H1 (cell line): ENCODE measurements at regions of chr16 and their contacts with region 1.

Region 1: DNA sequence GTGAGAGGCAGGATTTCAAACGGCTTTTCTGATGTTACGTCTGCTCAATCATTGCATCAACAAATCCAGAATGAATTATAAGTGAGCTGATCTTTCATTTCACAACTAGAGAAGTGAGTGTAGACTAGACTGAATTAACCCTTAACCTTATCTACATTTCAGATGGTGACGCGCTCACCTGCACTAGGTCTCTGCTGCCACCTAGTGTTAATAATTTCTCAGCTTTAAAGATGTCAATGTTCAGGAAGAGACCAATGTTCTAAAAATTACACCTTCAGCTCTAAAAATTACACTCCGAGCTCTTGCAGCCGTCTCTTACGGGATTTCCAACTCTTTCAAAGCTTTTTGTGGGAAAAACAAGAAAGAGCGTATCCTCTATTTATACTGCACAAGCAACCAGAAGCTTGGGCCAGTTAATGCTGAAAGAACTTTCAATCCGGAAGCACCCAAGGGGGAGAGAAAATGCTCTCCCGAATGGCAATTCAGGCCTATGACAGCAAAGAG is 88.2 kb upstream of the FA2H start:
- DNase-seq: no peak
- H3K4me3 ChIP-seq: no peak overlapping the region
- H3K27ac ChIP-seq: no peak overlapping the region
- H3K4me1 ChIP-seq: peaks cover 6 to 17% (median 10%) of the 10 kb centered on the region in 4 experiments; a peak in 5 of 7 replicates
- H3K27me3 ChIP-seq: no peaks in the 10 kb centered on the region
- CTCF ChIP-seq: peak in 2 of 3 experiments; percentile 67 to 79; a peak in 3 of 4 replicates
- EP300 ChIP-seq: no peak
- POLR2A ChIP-seq: no peak
- RAD21 ChIP-seq: peak; percentile 90 to 91

Region 2: DNA sequence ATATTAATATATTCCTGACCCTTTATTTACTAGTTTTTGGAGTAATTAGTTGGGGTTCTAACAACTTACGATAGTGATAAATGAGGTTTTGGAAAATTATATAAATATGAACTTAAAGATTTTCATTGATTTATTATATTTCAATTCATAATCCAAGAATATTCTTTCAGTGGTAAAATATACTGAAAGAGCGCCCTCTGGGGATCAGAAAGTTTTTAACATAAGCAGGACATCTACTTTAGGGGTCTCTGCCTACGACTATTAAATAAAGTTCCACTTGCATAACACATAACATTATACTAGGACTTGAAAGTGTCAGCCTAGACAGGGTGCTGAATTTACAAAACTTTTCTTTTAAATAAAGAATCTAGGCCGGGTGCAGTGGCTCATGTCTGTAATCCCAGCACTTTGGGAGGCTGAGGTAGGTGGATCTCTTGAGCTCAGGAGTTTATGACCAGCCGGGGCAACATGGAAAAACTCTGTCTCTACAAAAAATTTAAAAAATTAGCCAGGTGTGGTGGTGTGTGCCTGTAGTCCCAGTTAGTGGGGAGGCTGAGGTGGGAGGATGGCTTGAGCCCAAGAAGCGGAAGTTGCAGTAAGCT is 211.7 kb before region 1 on chr16:
- CTCF ChIA-PET with region 1: interaction called, 11 read pairs
- POLR2A ChIA-PET with region 1: no interaction called
- DNase-seq: no peak
- H3K4me3 ChIP-seq: no peak overlapping the region
- H3K27ac ChIP-seq: no peak overlapping the region
- H3K4me1 ChIP-seq: no peaks in the 10 kb centered on the region
- H3K27me3 ChIP-seq: no peaks in the 10 kb centered on the region
- CTCF ChIP-seq: peak in 1 of 3 experiments; percentile 29; a peak in 2 of 4 replicates
- EP300 ChIP-seq: no peak
- POLR2A ChIP-seq: no peak
- RAD21 ChIP-seq: no peak

Region 3: DNA sequence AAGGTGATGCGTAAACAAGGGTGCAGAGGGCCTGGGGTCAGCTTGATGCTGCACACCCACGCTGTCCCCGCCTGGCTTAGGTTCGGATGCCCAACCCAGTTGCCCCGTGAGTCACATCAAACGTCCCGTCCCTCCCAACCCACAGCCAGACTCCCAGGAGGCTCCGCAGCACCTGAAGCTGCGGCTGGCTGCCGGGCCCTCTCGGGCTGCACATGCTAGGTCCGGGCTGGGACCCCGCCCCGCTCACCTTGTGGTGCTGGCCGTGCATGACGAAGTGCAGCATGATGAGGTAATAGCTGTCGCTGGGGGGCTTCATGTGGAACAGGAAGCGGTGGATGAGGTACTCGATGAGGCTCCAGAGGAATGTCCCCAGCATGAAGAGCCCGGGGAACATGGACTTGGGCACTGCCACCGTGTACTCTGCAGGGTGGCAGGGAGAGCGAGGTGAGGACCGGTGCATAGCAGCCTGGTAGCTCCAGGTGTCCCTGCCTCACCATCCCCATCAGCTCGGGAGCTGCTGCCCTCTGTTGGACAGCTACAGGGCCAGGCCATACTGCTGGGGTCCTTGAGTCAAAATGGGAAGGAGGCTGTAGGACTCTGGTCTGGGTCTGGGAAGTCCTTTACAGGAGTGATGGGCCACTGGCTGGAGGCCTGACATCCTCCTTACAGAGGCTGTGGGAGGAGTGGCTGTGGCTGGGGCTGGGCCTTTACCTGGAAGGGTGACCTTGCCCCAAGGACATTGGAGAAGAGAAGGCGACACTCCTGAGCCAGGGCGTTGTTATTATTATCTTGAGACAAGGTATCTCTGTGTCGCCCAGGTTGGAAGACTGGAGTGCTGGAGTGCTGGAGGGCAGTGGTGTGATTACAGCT is 143.8 kb before region 1 on chr16:
- CTCF ChIA-PET with region 1: interaction called, 104 read pairs
- POLR2A ChIA-PET with region 1: no interaction called
- DNase-seq: no peak
- H3K4me3 ChIP-seq: no peak overlapping the region
- H3K27ac ChIP-seq: no peak overlapping the region
- H3K4me1 ChIP-seq: no peaks in the 10 kb centered on the region; a peak in 1 of 7 replicates
- H3K27me3 ChIP-seq: no peaks in the 10 kb centered on the region
- CTCF ChIP-seq: peak; percentile 28 to 56 (median 51)
- EP300 ChIP-seq: no peak
- POLR2A ChIP-seq: no peak
- RAD21 ChIP-seq: peak; percentile 13 to 34; a peak in 2 of 4 replicates

Region 4: DNA sequence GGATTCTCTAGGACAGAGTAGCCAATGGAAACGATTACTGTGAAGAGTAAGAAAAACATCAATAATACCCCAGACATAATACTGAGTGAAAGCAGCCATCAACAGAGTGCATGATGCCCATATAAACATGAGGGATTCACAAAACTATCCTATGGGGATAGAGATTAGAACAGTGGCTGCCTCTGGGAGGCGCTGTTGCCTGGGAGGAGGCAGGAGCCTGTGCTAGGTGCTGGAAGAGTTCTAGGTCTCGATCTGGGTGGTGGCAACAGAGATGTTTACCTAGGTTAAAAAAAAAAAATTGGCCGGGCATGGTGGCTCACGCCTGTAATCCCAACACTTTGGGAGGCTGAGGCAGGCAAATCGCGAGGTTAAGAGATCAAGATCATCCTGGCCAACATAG is 96.1 kb before region 1 on chr16:
- CTCF ChIA-PET with region 1: interaction called, 18 read pairs
- POLR2A ChIA-PET with region 1: no interaction called
- DNase-seq: peak in 1 of 2 experiments; percentile 67
- H3K4me3 ChIP-seq: no peak overlapping the region
- H3K27ac ChIP-seq: no peak overlapping the region
- H3K4me1 ChIP-seq: no peaks in the 10 kb centered on the region
- H3K27me3 ChIP-seq: no peaks in the 10 kb centered on the region; a peak in 1 of 7 replicates
- CTCF ChIP-seq: peak; percentile 61 to 78 (median 63)
- EP300 ChIP-seq: no peak
- POLR2A ChIP-seq: no peak
- RAD21 ChIP-seq: peak; percentile 62 to 72

Region 5: DNA sequence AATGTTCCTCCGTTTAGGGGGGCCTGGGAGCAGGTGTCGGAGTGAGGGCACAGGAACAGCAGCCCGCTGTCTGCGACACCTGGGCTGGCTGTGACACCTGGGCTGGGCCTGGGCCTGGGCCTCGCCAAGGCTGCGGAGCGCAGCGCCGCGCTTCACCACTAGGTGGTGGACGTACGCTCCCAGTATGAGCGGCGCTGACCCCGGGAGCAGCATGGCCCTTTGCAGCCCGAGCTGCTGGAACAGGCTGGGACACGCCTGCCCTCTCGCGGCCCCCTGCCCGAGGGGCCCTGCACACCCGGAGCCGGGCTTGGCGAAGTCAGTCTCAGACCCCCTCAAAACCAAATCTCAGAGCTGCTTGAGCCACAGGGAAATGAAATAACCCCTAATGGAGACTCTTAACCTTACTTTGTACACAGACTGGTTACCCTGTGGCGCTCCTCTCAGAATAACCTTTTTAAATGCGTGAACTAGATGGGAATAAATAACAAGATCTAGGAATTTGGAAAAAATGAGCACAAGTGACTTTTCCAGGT is 49.6 kb before region 1 on chr16:
- CTCF ChIA-PET with region 1: interaction called, 123 read pairs
- POLR2A ChIA-PET with region 1: no interaction called
- DNase-seq: peak; percentile 86 to 97
- H3K4me3 ChIP-seq: no peak overlapping the region
- H3K27ac ChIP-seq: no peak overlapping the region
- H3K4me1 ChIP-seq: peaks cover 0 to 11% (median 2%) of the 10 kb centered on the region in 4 experiments; a peak in 5 of 7 replicates
- H3K27me3 ChIP-seq: peaks cover 5 to 19% (median 14%) of the 10 kb centered on the region in 4 experiments; a peak in 6 of 7 replicates
- CTCF ChIP-seq: peak; percentile 90 to 100 (median 99)
- EP300 ChIP-seq: no peak
- POLR2A ChIP-seq: no peak
- RAD21 ChIP-seq: peak; percentile 94 to 95

Region 6: DNA sequence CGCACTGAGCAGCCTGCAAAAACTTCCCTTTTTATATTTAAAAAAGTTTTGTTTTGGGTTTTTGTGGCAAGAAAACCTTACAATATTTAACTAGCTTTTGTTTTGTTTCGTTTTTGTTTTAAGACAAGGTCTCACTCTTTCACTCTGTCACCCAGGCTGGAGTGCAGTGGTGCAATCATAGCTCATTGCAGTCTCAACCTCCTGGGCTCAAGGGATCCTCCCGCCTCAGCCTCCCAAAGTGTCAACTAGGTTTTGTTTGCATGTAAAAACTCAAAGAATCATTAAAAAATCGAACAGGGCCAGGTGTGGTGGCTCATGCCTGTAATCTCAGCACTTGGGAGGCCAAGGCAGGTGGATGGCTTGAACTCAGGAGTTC is 10.3 kb before region 1 on chr16:
- CTCF ChIA-PET with region 1: interaction called, 36 read pairs
- POLR2A ChIA-PET with region 1: interaction called, 6 read pairs
- DNase-seq: no peak
- H3K4me3 ChIP-seq: no peak overlapping the region
- H3K27ac ChIP-seq: no peak overlapping the region
- H3K4me1 ChIP-seq: no peaks in the 10 kb centered on the region
- H3K27me3 ChIP-seq: no peaks in the 10 kb centered on the region
- CTCF ChIP-seq: no peak
- EP300 ChIP-seq: no peak
- POLR2A ChIP-seq: no peak
- RAD21 ChIP-seq: no peak

Region 7: DNA sequence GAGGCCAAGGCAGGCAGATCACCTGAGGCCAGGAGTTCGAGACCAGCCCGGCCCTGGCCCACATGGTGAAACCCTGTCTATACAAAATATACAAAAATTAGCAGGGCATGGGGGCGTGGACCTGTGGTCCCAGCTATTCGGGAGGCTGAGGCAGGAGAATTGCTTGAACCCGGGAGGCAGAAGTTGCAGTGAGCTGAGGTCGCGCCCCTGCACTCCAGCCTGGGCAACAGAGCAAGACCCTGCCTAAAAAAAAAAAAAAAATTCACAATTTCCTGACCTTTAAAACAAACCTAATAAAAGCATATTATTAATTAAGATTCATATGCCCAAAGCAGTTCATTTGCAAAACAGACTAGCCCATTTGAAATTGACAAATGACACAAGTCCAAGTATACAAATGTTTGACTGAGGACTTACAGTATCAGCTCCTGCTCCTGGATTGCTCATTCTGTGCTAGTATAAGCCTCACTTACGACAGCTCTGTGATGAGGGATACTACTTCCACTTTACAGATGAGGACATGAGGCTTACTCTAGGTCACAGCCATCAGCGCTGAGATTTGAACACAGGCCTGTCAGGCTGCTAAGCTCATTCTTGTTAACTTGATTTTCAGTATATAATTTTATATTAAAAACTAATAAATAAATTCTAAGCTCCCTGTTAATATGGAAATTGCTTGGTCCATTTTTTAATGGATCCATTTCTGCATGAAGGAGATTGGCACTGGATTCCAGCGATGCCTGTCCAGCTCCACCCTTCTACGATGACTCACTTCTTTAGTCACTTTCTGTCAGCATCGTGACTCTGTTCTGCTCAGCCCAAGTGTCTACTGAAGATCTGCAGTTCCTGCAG is 33.8 kb after region 1 on chr16:
- CTCF ChIA-PET with region 1: no interaction called
- POLR2A ChIA-PET with region 1: no interaction called
- DNase-seq: no peak
- H3K4me3 ChIP-seq: no peak overlapping the region
- H3K27ac ChIP-seq: no peak overlapping the region
- H3K4me1 ChIP-seq: peaks cover 0 to 5% (median 0%) of the 10 kb centered on the region in 4 experiments; a peak in 1 of 7 replicates
- H3K27me3 ChIP-seq: no peaks in the 10 kb centered on the region
- CTCF ChIP-seq: no peak
- EP300 ChIP-seq: no peak
- POLR2A ChIP-seq: no peak
- RAD21 ChIP-seq: no peak

Region 8: GRCh38 chr16:74950165-74950915 is 87.5 kb after region 1 on chr16:
- CTCF ChIA-PET with region 1: no interaction called
- POLR2A ChIA-PET with region 1: no interaction called
- DNase-seq: no peak
- H3K4me3 ChIP-seq: no peak overlapping the region
- H3K27ac ChIP-seq: no peak overlapping the region
- H3K4me1 ChIP-seq: no peaks in the 10 kb centered on the region
- H3K27me3 ChIP-seq: no peaks in the 10 kb centered on the region
- CTCF ChIP-seq: no peak
- EP300 ChIP-seq: no peak
- POLR2A ChIP-seq: no peak
- RAD21 ChIP-seq: no peak